Endothelial cell of umbilical vein (primary cell): ENCODE measurements at regions of chr7 and their contacts with region 1.

Region 1: DNA sequence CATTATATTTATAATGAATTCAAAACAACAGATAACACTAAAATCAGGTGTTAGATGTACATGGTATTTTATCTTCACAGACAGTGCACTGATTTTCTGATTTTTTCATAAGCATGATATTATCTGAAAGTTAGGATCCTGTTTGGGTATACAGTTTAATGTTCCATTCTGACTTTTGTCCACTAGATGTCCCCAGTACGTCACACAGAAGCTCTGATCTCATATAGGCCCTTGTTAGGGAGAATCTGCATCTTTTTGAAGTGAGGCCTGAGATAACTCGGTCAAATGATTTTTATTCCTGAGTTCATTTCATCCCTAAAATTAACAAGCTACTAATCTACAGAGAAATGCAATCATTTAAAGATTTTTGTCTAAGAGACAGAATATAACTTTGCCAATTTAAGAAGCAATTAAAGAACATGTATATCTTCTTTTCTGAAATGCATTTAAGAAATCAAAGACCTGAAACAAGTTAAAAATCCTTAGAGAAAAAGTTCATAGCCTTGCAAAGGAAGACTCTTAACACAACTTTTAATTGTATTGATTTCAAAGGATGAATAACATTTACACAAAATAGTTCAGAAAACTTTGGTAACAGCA is 72.0 kb upstream of the TES start:
- DNase-seq: peak; percentile 81
- H3K4me3 ChIP-seq: no peak overlapping the region
- H3K27ac ChIP-seq: no peak overlapping the region
- H3K4me1 ChIP-seq: peaks cover 6% of the 10 kb centered on the region
- H3K27me3 ChIP-seq: no peaks in the 10 kb centered on the region
- CTCF ChIP-seq: peak; percentile 45 to 51
- POLR2A ChIP-seq: no peak

Region 2: DNA sequence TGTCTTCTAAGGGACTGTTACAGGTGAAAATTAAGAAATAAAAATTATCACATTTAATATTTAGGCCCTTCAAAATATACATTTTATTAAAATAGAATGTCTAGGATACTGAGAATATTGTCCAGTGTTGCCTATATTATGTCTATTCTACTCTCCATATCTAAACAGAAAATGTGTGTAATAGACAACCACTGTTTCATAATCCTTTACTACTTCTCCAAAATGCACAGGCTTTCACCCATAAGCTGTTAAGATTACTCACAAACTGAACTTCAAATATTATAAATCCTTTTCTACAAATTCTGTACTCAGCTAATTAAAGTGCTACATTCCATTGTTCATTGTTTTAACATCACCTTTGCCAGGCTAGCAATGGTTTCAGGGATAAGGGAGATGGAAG is 51.0 kb before region 1 on chr7:
- CTCF ChIA-PET with region 1: no interaction called
- POLR2A ChIA-PET with region 1: no interaction called
- dilution Hi-C with region 1: no loop called
- intact Hi-C with region 1: no loop called
- DNase-seq: no peak
- H3K4me3 ChIP-seq: no peak overlapping the region
- H3K27ac ChIP-seq: no peak overlapping the region
- H3K4me1 ChIP-seq: no peaks in the 10 kb centered on the region
- H3K27me3 ChIP-seq: no peaks in the 10 kb centered on the region
- CTCF ChIP-seq: no peak
- POLR2A ChIP-seq: no peak

Region 3: DNA sequence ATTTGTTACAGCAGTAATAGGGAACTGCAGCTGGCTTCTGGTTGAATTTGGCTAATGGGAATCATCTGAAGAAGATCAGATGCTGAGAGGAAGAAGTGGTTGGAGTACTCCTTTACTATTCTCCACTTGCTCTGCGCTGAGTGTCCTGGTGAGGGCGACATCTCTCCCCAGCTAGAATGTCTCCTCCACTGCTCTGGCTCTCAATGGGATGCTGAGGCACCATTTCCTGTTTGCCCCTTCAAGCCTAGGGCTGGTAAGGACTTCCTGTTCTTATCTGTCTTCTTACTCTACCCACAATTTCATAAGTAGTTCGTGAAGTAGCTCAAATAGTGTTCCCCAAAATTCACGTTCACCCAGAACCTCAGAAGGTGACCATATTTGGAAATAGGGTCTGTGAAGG is 28.9 kb after region 1 on chr7:
- CTCF ChIA-PET with region 1: interaction called, 7 read pairs
- POLR2A ChIA-PET with region 1: interaction called, 3 read pairs
- dilution Hi-C with region 1: no loop called
- intact Hi-C with region 1: loop called (anchors 1 kb)
- DNase-seq: no peak
- H3K4me3 ChIP-seq: no peak overlapping the region
- H3K27ac ChIP-seq: no peak overlapping the region
- H3K4me1 ChIP-seq: no peaks in the 10 kb centered on the region
- H3K27me3 ChIP-seq: no peaks in the 10 kb centered on the region
- CTCF ChIP-seq: peak in 1 of 2 donors; percentile 8
- POLR2A ChIP-seq: no peak

Region 4: GRCh38 chr7:116483271-116483942 is 345.1 kb after region 1 on chr7:
- CTCF ChIA-PET with region 1: no interaction called
- POLR2A ChIA-PET with region 1: no interaction called
- dilution Hi-C with region 1: no loop called
- intact Hi-C with region 1: no loop called
- DNase-seq: no peak
- H3K4me3 ChIP-seq: no peak overlapping the region
- H3K27ac ChIP-seq: no peak overlapping the region
- H3K4me1 ChIP-seq: no peaks in the 10 kb centered on the region
- H3K27me3 ChIP-seq: no peaks in the 10 kb centered on the region
- CTCF ChIP-seq: no peak
- POLR2A ChIP-seq: no peak